ENCODE measurements at regions of chr3 and their contacts with region 1.

Region 1: GRCh38 chr3:106844638-106845037 is 532.6 kb upstream of the CCDC54 start:
- DNase-seq: no peak
- ATAC-seq: no peak
- H3K4me3 Mint-ChIP-seq: no peak overlapping the region
- H3K27ac Mint-ChIP-seq: no peak overlapping the region
- H3K4me1 Mint-ChIP-seq: no peaks in the 10 kb centered on the region
- H3K27me3 Mint-ChIP-seq: peaks cover 2% of the 10 kb centered on the region

Region 2: GRCh38 chr3:106707347-106707746 is 137.3 kb before region 1 on chr3:
- CTCF ChIA-PET with region 1: no interaction called
- POLR2A ChIA-PET with region 1: no interaction called
- intact Hi-C with region 1: loop called in 1 of 2 experiments (anchors 5 kb)
- DNase-seq: no peak
- ATAC-seq: no peak
- H3K4me3 Mint-ChIP-seq: no peak overlapping the region
- H3K27ac Mint-ChIP-seq: no peak overlapping the region
- H3K4me1 Mint-ChIP-seq: no peaks in the 10 kb centered on the region
- H3K27me3 Mint-ChIP-seq: no peaks in the 10 kb centered on the region

Measured in activated CD4-positive, alpha-beta T cell treated with anti-CD3 and anti-CD28 coated beads for 36 hours (primary cell).